GM18951 (cell line): ENCODE measurements at regions of chr19 and their contacts with region 1.

Region 1: GRCh38 chr19:30682999-30683536 is 310.9 kb downstream of the ZNF536 start:
- POLR2A ChIP-seq: no peak

Region 2: GRCh38 chr19:30870876-30871275 is 187.8 kb after region 1 on chr19:
- in situ Hi-C with region 1: no loop called
- POLR2A ChIP-seq: no peak

Region 3: GRCh38 chr19:32224371-32225244 is 1541.5 kb after region 1 on chr19:
- in situ Hi-C with region 1: loop called (anchors 25 kb)
- POLR2A ChIP-seq: no peak